ENCODE measurements at regions of chr2 and their contacts with region 1.

Region 1: DNA sequence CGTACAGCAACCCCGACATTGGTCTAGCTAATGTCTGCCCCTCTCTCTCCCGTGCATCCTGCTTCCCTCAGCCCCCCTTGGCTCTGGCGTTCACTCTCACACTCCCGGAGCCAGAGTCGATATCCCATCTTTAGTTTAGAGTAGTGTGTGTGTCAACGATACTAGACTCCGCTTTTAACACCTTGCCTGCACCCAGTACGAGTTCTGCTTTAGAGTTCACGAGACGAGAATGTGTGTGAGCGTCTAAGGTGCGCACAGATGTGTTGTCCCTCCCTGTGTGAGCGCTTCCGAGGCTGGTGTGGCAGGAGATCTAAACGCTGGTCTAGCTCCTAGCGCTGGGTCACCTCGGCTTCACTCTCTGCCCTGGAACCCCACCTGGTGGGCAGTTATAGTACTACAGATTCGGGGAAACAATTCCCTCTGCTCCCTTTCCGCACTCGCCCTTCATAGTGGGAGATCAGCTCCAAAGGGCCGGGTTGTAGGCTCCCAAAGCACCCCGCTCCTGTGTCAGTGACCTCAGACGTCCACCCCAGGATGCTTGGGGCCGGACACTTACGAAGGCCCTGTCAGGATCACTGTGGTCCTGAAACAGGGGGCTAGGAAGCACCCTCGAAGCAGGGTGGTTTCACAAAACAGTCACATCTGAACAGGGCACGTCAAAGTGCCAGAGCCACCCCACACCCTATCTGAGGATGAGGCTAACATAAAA is 2.6 kb upstream of the CYP26B1 start:
- DNase-seq: peak; percentile 21 to 64 (median 44)
- ATAC-seq: peak; percentile 55
- H3K4me3 ChIP-seq: peak overlapping the region; percentile 34
- H3K4me3 Mint-ChIP-seq: peak overlapping the region; percentile 83
- H3K27ac ChIP-seq: no peak overlapping the region
- H3K27ac Mint-ChIP-seq: no peak overlapping the region
- H3K4me1 ChIP-seq: peaks cover 45% of the 10 kb centered on the region
- H3K4me1 Mint-ChIP-seq: peaks cover 45% of the 10 kb centered on the region
- H3K27me3 ChIP-seq: peaks cover 54 to 70% of the 10 kb centered on the region in 2 experiments
- H3K27me3 Mint-ChIP-seq: peaks cover 84% of the 10 kb centered on the region
- CTCF ChIP-seq: peak; percentile 70

Region 2: GRCh38 chr2:71952572-71953529 is 197.5 kb before region 1 on chr2:
- CTCF ChIA-PET with region 1: no interaction called
- POLR2A ChIA-PET with region 1: no interaction called
- intact Hi-C with region 1: no loop called
- DNase-seq: no peak
- ATAC-seq: no peak
- H3K4me3 ChIP-seq: no peak overlapping the region
- H3K4me3 Mint-ChIP-seq: no peak overlapping the region
- H3K27ac ChIP-seq: no peak overlapping the region
- H3K27ac Mint-ChIP-seq: no peak overlapping the region
- H3K4me1 ChIP-seq: no peaks in the 10 kb centered on the region
- H3K4me1 Mint-ChIP-seq: no peaks in the 10 kb centered on the region
- H3K27me3 ChIP-seq: peaks cover 0 to 6% of the 10 kb centered on the region in 2 experiments
- H3K27me3 Mint-ChIP-seq: no peaks in the 10 kb centered on the region
- CTCF ChIP-seq: no peak

Region 3: GRCh38 chr2:72112401-72112800 is 37.9 kb before region 1 on chr2:
- CTCF ChIA-PET with region 1: no interaction called
- POLR2A ChIA-PET with region 1: no interaction called
- intact Hi-C with region 1: no loop called
- DNase-seq: no peak
- ATAC-seq: no peak
- H3K4me3 ChIP-seq: no peak overlapping the region
- H3K4me3 Mint-ChIP-seq: no peak overlapping the region
- H3K27ac ChIP-seq: no peak overlapping the region
- H3K27ac Mint-ChIP-seq: no peak overlapping the region
- H3K4me1 ChIP-seq: no peaks in the 10 kb centered on the region
- H3K4me1 Mint-ChIP-seq: no peaks in the 10 kb centered on the region
- H3K27me3 ChIP-seq: no peaks in the 10 kb centered on the region
- H3K27me3 Mint-ChIP-seq: peaks cover 24% of the 10 kb centered on the region
- CTCF ChIP-seq: no peak

Region 4: GRCh38 chr2:72745679-72746368 is 595.5 kb after region 1 on chr2:
- CTCF ChIA-PET with region 1: no interaction called
- POLR2A ChIA-PET with region 1: no interaction called
- intact Hi-C with region 1: loop called in 1 of 2 experiments (anchors 10 kb)
- DNase-seq: peak in 3 of 14 experiments; percentile 38 to 56 (median 50)
- ATAC-seq: no peak
- H3K4me3 ChIP-seq: no peak overlapping the region
- H3K4me3 Mint-ChIP-seq: no peak overlapping the region
- H3K27ac ChIP-seq: no peak overlapping the region
- H3K27ac Mint-ChIP-seq: no peak overlapping the region
- H3K4me1 ChIP-seq: no peaks in the 10 kb centered on the region
- H3K4me1 Mint-ChIP-seq: no peaks in the 10 kb centered on the region
- H3K27me3 ChIP-seq: no peaks in the 10 kb centered on the region
- H3K27me3 Mint-ChIP-seq: no peaks in the 10 kb centered on the region
- CTCF ChIP-seq: peak; percentile 75

Measured in CD4-positive, alpha-beta T cell (primary cell).